SK-N-SH (cell line): ENCODE measurements at regions of chr19 and their contacts with region 1.

Region 1: GRCh38 chr19:17448131-17448967 is at the start of gene TMEM221:
- DNase-seq: peak; percentile 86
- H3K4me3 ChIP-seq: peak within 1 kb of the TSS; percentile 41 to 50; a peak in 3 of 4 replicates
- H3K27ac ChIP-seq: no peak within 1 kb of the TSS
- H3K4me1 ChIP-seq: no peaks in the 10 kb centered on the region; a peak in 1 of 4 replicates
- H3K27me3 ChIP-seq: no peaks in the 10 kb centered on the region
- CTCF ChIP-seq: peak; percentile 65
- EP300 ChIP-seq: no peak
- RAD21 ChIP-seq: no peak
- polyA plus RNA-seq, gene TMEM221: 0.41 and 0.62 TPM in 2 replicates

Region 2: DNA sequence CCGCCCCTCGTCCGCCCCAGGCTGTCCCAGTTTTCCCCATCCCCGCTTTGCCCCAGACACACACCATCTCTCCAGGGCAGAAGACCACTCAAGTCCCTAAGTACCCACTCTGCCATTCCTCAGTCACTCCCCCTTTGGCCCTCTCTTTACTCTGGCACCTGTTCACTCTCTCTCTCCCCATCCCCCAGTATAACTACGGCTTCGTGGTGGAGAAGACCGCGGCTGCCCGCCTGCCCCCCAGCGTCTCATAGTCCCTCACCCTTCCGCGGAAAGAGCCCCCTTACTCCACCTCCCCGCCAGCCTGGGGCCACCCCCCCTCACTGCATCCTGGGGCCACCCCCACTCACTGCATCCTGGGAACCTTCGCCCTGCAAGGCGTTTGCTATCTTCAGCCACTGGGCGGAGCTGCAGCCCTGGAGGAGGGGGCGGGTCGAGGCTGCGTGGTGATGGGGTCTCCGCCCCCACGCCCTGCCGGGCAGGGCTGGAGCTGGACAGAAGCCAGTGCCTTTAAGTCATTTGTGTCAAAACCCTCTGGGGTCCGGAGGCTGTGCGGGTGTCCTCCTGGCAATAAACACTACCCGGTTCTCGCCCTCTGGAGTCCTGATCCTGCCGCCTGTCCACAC is 23.5 kb before region 1 on chr19:
- CTCF ChIA-PET with region 1: interaction called, 11 read pairs
- POLR2A ChIA-PET with region 1: no interaction called
- DNase-seq: peak; percentile 91
- H3K4me3 ChIP-seq: peak overlapping the region in 1 of 2 experiments; percentile 26; a peak in 1 of 4 replicates
- H3K27ac ChIP-seq: no peak overlapping the region
- H3K4me1 ChIP-seq: peaks cover 0 to 4% of the 10 kb centered on the region in 2 experiments; a peak in 1 of 4 replicates
- H3K27me3 ChIP-seq: no peaks in the 10 kb centered on the region
- CTCF ChIP-seq: peak; percentile 45
- EP300 ChIP-seq: no peak
- RAD21 ChIP-seq: peak; percentile 51

Region 3: GRCh38 chr19:17460372-17461230 is 12.3 kb after region 1 on chr19 and contains the start of gene NXNL1:
- CTCF ChIA-PET with region 1: interaction called, 16 read pairs
- POLR2A ChIA-PET with region 1: interaction called, 3 read pairs
- DNase-seq: no peak
- H3K4me3 ChIP-seq: no peak within 1 kb of the TSS
- H3K27ac ChIP-seq: no peak within 1 kb of the TSS
- H3K4me1 ChIP-seq: no peaks in the 10 kb centered on the region; a peak in 1 of 4 replicates
- H3K27me3 ChIP-seq: peaks cover 26% of the 10 kb centered on the region
- CTCF ChIP-seq: no peak
- EP300 ChIP-seq: no peak
- RAD21 ChIP-seq: no peak
- polyA plus RNA-seq, gene NXNL1: not detected in 2 replicates